ENCODE measurements at regions of chr13 and their contacts with region 1.

Region 1: DNA sequence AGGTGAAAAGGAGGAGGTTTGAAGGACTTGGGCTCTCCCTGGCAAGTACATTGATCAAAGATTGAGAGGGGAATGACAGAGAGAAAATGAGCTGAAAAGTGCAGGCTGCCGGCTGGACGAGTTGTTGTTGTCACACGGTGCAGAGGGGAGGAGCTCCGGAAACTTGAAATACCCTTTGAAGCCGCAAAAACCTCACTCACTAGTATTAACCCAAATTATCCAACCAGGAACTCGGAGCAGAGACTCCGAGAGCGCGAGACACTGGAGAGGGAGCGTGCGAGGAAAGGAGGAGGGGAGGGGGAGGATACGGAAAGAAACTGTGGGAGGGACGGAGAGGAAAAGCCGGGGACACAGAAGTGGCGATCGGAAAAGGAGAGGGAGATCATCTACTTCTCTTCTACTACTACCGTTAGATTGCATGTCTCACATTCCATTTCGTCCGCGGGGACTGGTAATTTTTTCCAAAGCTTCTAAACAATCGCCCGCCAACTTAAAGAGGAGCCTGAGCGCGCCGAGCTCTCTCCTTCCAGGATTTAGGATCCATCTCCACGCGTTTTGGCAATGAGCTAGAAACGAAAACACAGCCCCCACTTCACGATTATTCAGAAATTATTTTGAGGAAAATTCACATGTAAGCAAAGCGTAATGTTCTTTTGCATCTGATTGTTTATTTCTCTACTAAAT is at the start of gene DACH1:
- DNase-seq: peak; percentile 56 to 70 (median 68)
- ATAC-seq: peak; percentile 68 to 82 (median 80)
- H3K4me3 ChIP-seq: peak within 1 kb of the TSS; percentile 62 to 90 (median 76)
- H3K27ac ChIP-seq: peak within 1 kb of the TSS in 11 of 12 donors; percentile 56 to 88 (median 76)
- H3K4me1 ChIP-seq: peaks cover 0 to 20% (median 5%) of the 10 kb centered on the region in 12 donors
- H3K27me3 ChIP-seq: peaks cover 0 to 26% (median 8%) of the 10 kb centered on the region in 9 donors
- CTCF ChIP-seq: no peak
- POLR2A ChIP-seq: no peak
- total RNA-seq, gene DACH1: 1.2 to 3.8 (median 2.2) TPM

Region 2: GRCh38 chr13:71378961-71379905 is 488.0 kb before region 1 on chr13:
- intact Hi-C with region 1: loop called in 1 of 10 experiments (anchors 10 kb)
- DNase-seq: no peak
- ATAC-seq: peak in 1 of 4 donors; percentile 58
- H3K4me3 ChIP-seq: peak overlapping the region in 10 of 12 donors; percentile 7 to 49 (median 37)
- H3K27ac ChIP-seq: peak overlapping the region in 11 of 12 donors; percentile 2 to 84 (median 64)
- H3K4me1 ChIP-seq: peaks cover 0 to 13% (median 0%) of the 10 kb centered on the region in 12 donors
- H3K27me3 ChIP-seq: no peaks in the 10 kb centered on the region
- CTCF ChIP-seq: no peak
- POLR2A ChIP-seq: no peak

Region 3: DNA sequence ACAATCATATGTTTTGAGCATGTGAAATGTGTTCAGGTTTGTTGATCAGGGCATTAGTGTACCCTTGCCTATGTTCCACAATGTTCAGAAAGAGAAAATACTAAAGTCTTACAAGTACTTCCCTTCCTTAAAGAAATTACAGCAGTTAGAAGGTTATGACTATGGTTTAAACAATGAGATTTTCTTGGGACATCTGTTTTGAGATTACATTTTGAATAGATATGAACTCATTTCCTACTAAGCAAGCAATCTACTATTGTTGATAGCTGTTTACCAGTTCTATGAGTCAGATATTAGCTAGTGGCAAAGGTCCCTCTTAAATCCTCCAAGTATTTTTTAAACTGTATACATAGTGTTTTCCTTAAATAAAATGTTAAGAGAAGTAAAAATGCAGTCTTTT is 241.6 kb before region 1 on chr13:
- intact Hi-C with region 1: loop called in 5 of 10 experiments (anchors 5 to 10 kb)
- DNase-seq: no peak
- ATAC-seq: peak in 2 of 4 donors; percentile 58 to 80
- H3K4me3 ChIP-seq: no peak overlapping the region
- H3K27ac ChIP-seq: peak overlapping the region in 11 of 12 donors; percentile 11 to 68 (median 54)
- H3K4me1 ChIP-seq: peaks cover 0 to 24% (median 8%) of the 10 kb centered on the region in 12 donors
- H3K27me3 ChIP-seq: no peaks in the 10 kb centered on the region
- CTCF ChIP-seq: no peak
- POLR2A ChIP-seq: no peak

Region 4: DNA sequence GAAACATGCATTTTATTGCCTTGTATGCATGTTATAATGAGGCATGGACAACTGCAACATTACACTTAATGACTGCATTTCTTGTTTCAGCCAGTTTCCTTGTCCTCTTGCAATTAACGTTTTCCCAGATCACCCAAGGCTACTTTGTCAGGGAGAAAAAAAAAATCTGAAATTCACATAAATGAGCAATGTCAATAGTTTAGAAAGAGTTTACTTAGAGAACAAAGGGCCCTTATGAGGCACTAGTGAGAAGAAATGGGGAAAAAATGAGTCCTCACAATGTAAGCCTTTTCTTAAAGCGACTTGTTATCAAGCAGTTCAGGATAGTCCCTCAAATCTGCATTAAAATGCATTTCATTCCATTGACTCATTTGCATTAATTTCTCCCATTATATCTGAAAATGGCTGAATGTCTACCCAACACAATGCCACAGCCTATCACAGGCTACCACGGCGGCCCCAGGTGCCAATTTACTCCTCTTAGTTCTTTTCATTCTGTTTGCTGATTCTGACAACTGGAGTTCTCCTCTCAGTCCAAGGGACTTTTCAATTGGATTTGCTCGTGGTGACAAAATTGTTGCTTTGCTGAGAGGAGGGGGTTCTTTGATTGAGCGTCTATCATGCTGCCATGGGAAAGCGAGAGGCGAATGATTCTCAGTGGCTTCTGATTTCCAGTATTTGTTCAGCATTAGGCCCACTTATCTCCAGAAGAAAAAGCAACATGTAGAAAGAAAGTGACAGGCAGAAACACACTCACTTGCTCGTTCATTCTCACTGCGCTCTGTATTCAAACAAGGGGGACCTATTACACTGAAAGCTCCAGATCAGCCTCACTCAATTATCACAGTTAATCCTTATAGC is 107.4 kb before region 1 on chr13:
- intact Hi-C with region 1: loop called in 1 of 10 experiments (anchors 10 kb)
- DNase-seq: no peak
- ATAC-seq: no peak
- H3K4me3 ChIP-seq: no peak overlapping the region
- H3K27ac ChIP-seq: no peak overlapping the region
- H3K4me1 ChIP-seq: peaks cover 0 to 12% (median 4%) of the 10 kb centered on the region in 12 donors
- H3K27me3 ChIP-seq: no peaks in the 10 kb centered on the region
- CTCF ChIP-seq: no peak
- POLR2A ChIP-seq: no peak

Region 5: GRCh38 chr13:71789693-71790329 is 77.5 kb before region 1 on chr13:
- intact Hi-C with region 1: loop called in 2 of 10 experiments (anchors 5 to 10 kb)
- DNase-seq: no peak
- ATAC-seq: no peak
- H3K4me3 ChIP-seq: peak overlapping the region in 1 of 12 donors; percentile 13
- H3K27ac ChIP-seq: peak overlapping the region in 1 of 12 donors; percentile 31
- H3K4me1 ChIP-seq: peaks cover 0 to 3% (median 0%) of the 10 kb centered on the region in 12 donors
- H3K27me3 ChIP-seq: peaks cover 0 to 3% (median 0%) of the 10 kb centered on the region in 9 donors
- CTCF ChIP-seq: no peak
- POLR2A ChIP-seq: no peak

Region 6: DNA sequence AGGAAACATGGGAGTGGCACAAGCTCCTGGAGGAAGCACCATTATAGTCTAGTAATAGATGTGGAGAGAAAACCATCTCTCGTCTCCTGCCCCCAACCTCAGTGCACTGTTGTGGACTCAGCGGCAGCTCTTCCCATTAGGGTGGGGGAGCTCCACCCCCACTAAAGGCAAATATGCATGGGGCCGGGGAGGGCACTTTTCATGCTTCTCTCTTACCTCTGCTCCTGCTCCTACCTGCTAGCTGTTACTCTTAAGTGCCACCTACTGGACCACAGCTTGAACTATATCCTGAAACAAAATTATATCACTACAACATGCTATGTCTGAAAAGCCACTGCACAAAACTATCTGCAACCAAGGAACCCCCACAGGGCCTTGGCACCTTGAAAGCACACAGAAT is 112.3 kb after region 1 on chr13:
- intact Hi-C with region 1: no loop called
- DNase-seq: no peak
- ATAC-seq: no peak
- H3K4me3 ChIP-seq: no peak overlapping the region
- H3K27ac ChIP-seq: no peak overlapping the region
- H3K4me1 ChIP-seq: no peaks in the 10 kb centered on the region
- H3K27me3 ChIP-seq: no peaks in the 10 kb centered on the region
- CTCF ChIP-seq: no peak
- POLR2A ChIP-seq: no peak